Dendritic cell treated with granulocyte-macrophage colony-stimulating factor and Interleukin-4, amounts not matched to agents 40 ng/mL and 50 ng/mL, for 4 days (primary cell): ENCODE measurements at regions of chr20 and their contacts with region 1.

Region 1: GRCh38 chr20:48620519-48621254 is 207.1 kb downstream of the PREX1 start:
- H3K4me3 Mint-ChIP-seq: peak overlapping the region; percentile 55
- H3K27ac Mint-ChIP-seq: no peak overlapping the region
- H3K4me1 Mint-ChIP-seq: peaks cover 32% of the 10 kb centered on the region
- H3K27me3 Mint-ChIP-seq: peaks cover 8% of the 10 kb centered on the region

Region 2: GRCh38 chr20:47663333-47664067 is 957.2 kb before region 1 on chr20:
- intact Hi-C with region 1: loop called (anchors 5 kb)
- H3K4me3 Mint-ChIP-seq: no peak overlapping the region
- H3K27ac Mint-ChIP-seq: peak overlapping the region; percentile 31
- H3K4me1 Mint-ChIP-seq: peaks cover 37% of the 10 kb centered on the region
- H3K27me3 Mint-ChIP-seq: no peaks in the 10 kb centered on the region

Region 3: GRCh38 chr20:47677635-47678453 is 942.8 kb before region 1 on chr20:
- intact Hi-C with region 1: loop called (anchors 5 kb)
- H3K4me3 Mint-ChIP-seq: no peak overlapping the region
- H3K27ac Mint-ChIP-seq: no peak overlapping the region
- H3K4me1 Mint-ChIP-seq: peaks cover 24% of the 10 kb centered on the region
- H3K27me3 Mint-ChIP-seq: no peaks in the 10 kb centered on the region

Region 4: GRCh38 chr20:47785854-47786764 is 834.6 kb before region 1 on chr20:
- intact Hi-C with region 1: loop called (anchors 1 kb)
- H3K4me3 Mint-ChIP-seq: peak overlapping the region; percentile 99
- H3K27ac Mint-ChIP-seq: peak overlapping the region; percentile 86
- H3K4me1 Mint-ChIP-seq: peaks cover 45% of the 10 kb centered on the region
- H3K27me3 Mint-ChIP-seq: peaks cover 27% of the 10 kb centered on the region

Region 5: GRCh38 chr20:48489656-48490055 is 131.0 kb before region 1 on chr20:
- intact Hi-C with region 1: no loop called
- H3K4me3 Mint-ChIP-seq: no peak overlapping the region
- H3K27ac Mint-ChIP-seq: no peak overlapping the region
- H3K4me1 Mint-ChIP-seq: no peaks in the 10 kb centered on the region
- H3K27me3 Mint-ChIP-seq: peaks cover 12% of the 10 kb centered on the region